BJ (cell line): ENCODE measurements at regions of chrX and their contacts with region 1.

Region 1: DNA sequence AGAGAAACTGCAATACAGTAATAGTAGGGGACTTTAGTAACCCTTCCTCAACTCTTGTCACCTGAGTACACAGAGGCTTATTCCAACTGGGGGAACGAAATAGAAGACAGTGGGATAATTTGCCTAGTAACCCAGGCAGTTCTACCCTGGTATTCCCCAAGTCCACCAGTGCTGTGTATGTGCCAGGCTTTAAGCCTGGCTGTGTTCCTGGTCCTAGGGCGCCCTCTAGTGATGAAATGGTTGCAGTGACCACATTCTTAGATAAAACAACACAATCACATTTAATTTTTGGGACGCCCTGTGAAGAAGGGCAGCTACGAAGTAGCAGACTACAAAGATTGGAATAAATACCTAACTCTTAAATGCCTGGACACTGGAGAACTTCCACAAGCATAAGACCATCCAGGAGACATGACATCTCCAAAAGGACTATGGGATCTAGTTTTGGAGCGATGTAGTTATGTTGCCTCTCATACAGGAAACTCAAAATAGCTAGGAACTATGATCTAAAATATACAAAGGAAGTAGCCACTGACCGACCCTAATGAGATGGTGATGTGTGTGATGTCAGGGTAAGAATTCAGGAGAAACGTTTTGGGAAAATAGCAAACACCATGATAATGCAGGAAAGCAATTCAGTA is 288.5 kb upstream of the ZCCHC13 start:
- DNase-seq: no peak
- H3K4me3 ChIP-seq: no peak overlapping the region
- H3K27me3 ChIP-seq: no peaks in the 10 kb centered on the region
- CTCF ChIP-seq: peak; percentile 66

Region 2: DNA sequence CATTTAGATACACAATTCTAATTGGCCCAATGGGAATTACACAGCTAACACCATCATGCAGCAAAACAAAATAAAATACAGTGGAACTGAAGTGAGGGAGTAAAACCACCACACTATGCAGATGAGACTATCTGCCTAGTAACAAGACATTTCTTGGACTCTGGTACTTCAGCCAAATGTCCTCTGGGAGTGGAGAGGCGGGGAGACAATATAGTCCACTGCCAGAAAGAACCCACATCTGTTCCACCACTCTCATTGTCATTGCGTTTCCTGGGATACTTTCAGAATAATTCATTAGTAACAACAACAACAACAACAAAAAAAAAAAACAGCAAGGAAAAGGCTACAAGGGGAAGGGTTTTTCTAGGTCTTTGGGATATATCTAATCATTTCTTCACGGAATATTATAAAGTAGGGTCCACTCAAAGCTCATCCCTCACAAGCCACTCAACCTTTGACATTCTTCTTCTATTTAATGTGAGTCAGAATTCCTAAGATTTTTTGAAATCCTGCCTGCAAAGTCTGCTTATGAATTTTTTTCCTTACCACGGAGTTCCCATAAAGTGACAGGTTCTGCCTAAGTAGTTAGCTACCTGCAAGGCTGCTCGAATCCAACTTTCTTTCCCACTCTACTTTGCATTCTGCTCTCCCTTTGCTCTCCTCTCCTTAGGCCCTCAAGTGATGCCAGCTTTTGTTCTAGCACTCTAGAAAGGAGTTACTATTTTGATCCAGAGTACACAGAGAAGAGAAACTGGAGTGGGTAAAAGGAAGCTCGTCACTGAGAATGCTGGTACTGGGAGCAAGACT is 197.9 kb before region 1 on chrX:
- CTCF ChIA-PET with region 1: no interaction called
- POLR2A ChIA-PET with region 1: no interaction called
- DNase-seq: no peak
- H3K4me3 ChIP-seq: no peak overlapping the region
- H3K27me3 ChIP-seq: no peaks in the 10 kb centered on the region
- CTCF ChIP-seq: no peak

Region 3: DNA sequence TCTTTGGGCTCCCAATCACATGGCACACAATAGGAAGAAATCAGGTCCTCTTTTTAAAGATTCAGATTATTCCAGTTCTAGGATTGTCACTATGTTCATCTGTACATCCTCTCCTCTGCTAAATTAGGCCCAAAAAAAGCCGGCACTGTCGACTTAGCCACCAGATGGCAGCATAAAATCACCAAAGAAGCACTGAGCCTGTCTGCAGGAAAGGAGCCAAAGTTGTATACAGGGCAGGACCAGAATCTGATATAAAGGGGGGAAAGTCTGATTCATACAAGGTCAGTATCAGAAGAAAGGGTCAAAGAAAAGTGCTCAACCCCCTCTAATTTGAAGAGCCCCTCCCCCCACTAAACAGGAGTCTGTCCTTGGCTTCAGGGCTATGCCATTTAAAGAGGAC is 160.0 kb before region 1 on chrX:
- CTCF ChIA-PET with region 1: interaction called, 14 read pairs
- POLR2A ChIA-PET with region 1: no interaction called
- DNase-seq: no peak
- H3K4me3 ChIP-seq: no peak overlapping the region
- H3K27me3 ChIP-seq: no peaks in the 10 kb centered on the region
- CTCF ChIP-seq: peak; percentile 65